Dendritic cell treated with granulocyte-macrophage colony-stimulating factor and Interleukin-4, amounts not matched to agents 40 ng/mL and 50 ng/mL, for 4 days (primary cell): ENCODE measurements at regions of chr14 and their contacts with region 1.

Region 1: GRCh38 chr14:76151398-76152339 is at the start of gene GPATCH2L:
- H3K4me3 Mint-ChIP-seq: peak within 1 kb of the TSS; percentile 94
- H3K27ac Mint-ChIP-seq: peak within 1 kb of the TSS; percentile 95
- H3K4me1 Mint-ChIP-seq: peaks cover 44% of the 10 kb centered on the region
- H3K27me3 Mint-ChIP-seq: peaks cover 14% of the 10 kb centered on the region

Region 2: GRCh38 chr14:76090616-76091391 is 60.9 kb before region 1 on chr14:
- intact Hi-C with region 1: no loop called
- H3K4me3 Mint-ChIP-seq: no peak overlapping the region
- H3K27ac Mint-ChIP-seq: no peak overlapping the region
- H3K4me1 Mint-ChIP-seq: no peaks in the 10 kb centered on the region
- H3K27me3 Mint-ChIP-seq: peaks cover 4% of the 10 kb centered on the region

Region 3: GRCh38 chr14:76191297-76191696 is 39.6 kb after region 1 on chr14:
- intact Hi-C with region 1: loop called (anchors 5 kb)
- H3K4me3 Mint-ChIP-seq: peak overlapping the region; percentile 20
- H3K27ac Mint-ChIP-seq: peak overlapping the region; percentile 88
- H3K4me1 Mint-ChIP-seq: peaks cover 55% of the 10 kb centered on the region
- H3K27me3 Mint-ChIP-seq: no peaks in the 10 kb centered on the region